ENCODE measurements at regions of chr16 and their contacts with region 1.

Region 1: GRCh38 chr16:87778830-87779579 is 13.2 kb upstream of the KLHDC4 start:
- DNase-seq: peak; percentile 96
- ATAC-seq: peak; percentile 81
- H3K4me3 Mint-ChIP-seq: peak overlapping the region; percentile 64
- H3K27ac Mint-ChIP-seq: peak overlapping the region; percentile 95
- H3K4me1 Mint-ChIP-seq: peaks cover 44% of the 10 kb centered on the region
- H3K27me3 Mint-ChIP-seq: no peaks in the 10 kb centered on the region
- CTCF ChIP-seq: peak; percentile 74

Region 2: GRCh38 chr16:87806603-87807546 is 27.9 kb after region 1 on chr16:
- CTCF ChIA-PET with region 1: interaction called, 89 read pairs
- POLR2A ChIA-PET with region 1: interaction called, 245 read pairs
- intact Hi-C with region 1: loop called (anchors 1 kb)
- DNase-seq: peak; percentile 55
- ATAC-seq: peak; percentile 43
- H3K4me3 Mint-ChIP-seq: peak overlapping the region; percentile 75
- H3K27ac Mint-ChIP-seq: peak overlapping the region; percentile 95
- H3K4me1 Mint-ChIP-seq: peaks cover 74% of the 10 kb centered on the region
- H3K27me3 Mint-ChIP-seq: no peaks in the 10 kb centered on the region
- CTCF ChIP-seq: no peak

Region 3: GRCh38 chr16:87853411-87854052 is 74.5 kb after region 1 on chr16:
- CTCF ChIA-PET with region 1: interaction called, 49 read pairs
- POLR2A ChIA-PET with region 1: interaction called, 54 read pairs
- intact Hi-C with region 1: loop called (anchors 1 kb)
- DNase-seq: peak; percentile 73
- ATAC-seq: peak; percentile 76
- H3K4me3 Mint-ChIP-seq: peak overlapping the region; percentile 70
- H3K27ac Mint-ChIP-seq: peak overlapping the region; percentile 71
- H3K4me1 Mint-ChIP-seq: peaks cover 44% of the 10 kb centered on the region
- H3K27me3 Mint-ChIP-seq: no peaks in the 10 kb centered on the region
- CTCF ChIP-seq: no peak

Region 4: DNA sequence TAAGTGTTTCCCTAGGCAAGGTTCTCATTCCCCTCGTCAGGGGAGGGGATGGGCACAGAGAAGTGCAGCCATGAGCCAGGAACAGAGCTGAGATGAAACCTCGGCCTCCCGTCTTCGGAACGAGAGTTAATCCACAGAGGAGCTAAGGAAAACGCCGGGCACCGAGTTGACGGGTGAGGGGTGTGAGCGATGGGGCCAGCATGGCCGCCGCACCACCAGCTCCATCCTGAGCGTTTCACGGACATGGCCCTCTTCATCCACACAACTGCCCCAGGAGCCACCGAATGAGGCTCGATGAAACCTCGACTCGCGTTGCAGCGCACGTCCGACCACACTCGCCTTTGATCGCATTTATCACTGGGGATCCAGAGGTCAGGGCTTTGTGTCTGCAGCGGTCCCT is 135.8 kb after region 1 on chr16:
- CTCF ChIA-PET with region 1: interaction called, 30 read pairs
- POLR2A ChIA-PET with region 1: interaction called, 5 read pairs
- intact Hi-C with region 1: no loop called
- DNase-seq: no peak
- ATAC-seq: no peak
- H3K4me3 Mint-ChIP-seq: no peak overlapping the region
- H3K27ac Mint-ChIP-seq: no peak overlapping the region
- H3K4me1 Mint-ChIP-seq: no peaks in the 10 kb centered on the region
- H3K27me3 Mint-ChIP-seq: peaks cover 28% of the 10 kb centered on the region
- CTCF ChIP-seq: no peak

Region 5: DNA sequence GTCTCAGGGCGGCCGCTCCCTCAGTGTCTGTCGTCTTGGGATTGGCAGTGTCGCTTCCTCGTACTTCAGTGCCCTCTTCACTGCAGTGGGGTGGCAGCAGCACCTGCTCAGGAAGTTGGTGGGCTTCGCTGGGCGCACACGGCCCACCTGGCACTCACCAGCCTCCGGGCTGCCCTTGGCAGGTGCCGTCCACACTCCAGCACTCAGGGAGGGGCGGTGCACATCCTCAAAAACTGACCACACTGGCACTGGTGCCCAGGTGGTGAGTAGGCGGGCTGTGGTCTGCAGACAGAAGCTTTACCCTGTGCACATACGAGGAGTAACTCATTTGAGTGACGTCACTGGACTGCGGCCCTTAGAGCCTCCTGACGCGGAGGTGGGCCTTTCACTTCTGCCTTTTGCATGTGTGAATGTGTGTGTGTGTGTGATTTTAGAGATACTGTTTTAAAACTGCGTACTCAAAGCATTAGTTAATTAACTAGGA is 266.9 kb after region 1 on chr16:
- CTCF ChIA-PET with region 1: no interaction called
- POLR2A ChIA-PET with region 1: interaction called, 8 read pairs
- intact Hi-C with region 1: loop called (anchors 1 kb)
- DNase-seq: peak; percentile 83
- ATAC-seq: peak; percentile 72
- H3K4me3 Mint-ChIP-seq: peak overlapping the region; percentile 77
- H3K27ac Mint-ChIP-seq: peak overlapping the region; percentile 98
- H3K4me1 Mint-ChIP-seq: peaks cover 83% of the 10 kb centered on the region
- H3K27me3 Mint-ChIP-seq: no peaks in the 10 kb centered on the region
- CTCF ChIP-seq: no peak

Region 6: GRCh38 chr16:88144028-88144511 is 365.1 kb after region 1 on chr16:
- CTCF ChIA-PET with region 1: no interaction called
- POLR2A ChIA-PET with region 1: no interaction called
- intact Hi-C with region 1: no loop called
- DNase-seq: no peak
- ATAC-seq: no peak
- H3K4me3 Mint-ChIP-seq: no peak overlapping the region
- H3K27ac Mint-ChIP-seq: no peak overlapping the region
- H3K4me1 Mint-ChIP-seq: peaks cover 5% of the 10 kb centered on the region
- H3K27me3 Mint-ChIP-seq: no peaks in the 10 kb centered on the region
- CTCF ChIP-seq: no peak

Region 7: DNA sequence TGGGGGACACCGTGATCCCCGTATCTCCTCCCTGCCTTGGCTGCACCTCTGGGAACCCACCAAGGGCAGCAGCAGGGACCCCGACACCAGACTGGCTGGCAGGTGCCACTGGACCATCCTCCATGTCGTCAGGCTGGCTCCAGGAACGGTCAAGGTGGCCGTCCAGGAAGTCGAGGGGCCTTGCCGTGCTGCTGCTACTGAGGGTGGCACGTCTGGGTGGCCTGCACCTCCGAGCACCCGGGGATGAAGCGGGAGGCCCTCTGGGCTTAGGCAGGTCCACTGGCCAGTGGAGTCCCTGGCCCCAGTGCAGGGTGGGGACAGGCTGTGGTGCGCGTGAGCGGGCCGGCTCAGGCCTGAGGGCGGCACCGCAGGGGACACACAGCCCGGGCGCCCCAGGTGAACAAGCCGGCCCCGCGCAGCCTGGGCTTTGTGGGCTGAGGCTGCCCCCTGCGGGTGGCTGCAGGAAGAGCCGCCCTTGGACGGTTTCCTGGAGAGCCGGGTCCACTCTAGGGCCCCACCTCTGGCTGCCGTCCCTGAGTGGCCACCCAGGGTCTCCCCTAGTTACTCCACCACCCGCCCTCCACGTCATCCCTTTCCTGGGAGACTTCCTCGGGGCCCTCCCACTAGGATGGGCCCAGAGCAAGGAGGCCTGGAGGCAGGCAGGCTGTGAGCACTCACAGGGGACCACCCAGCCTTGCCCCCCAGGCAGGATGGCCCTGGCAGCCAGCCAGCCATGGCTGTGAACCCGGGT is 748.4 kb after region 1 on chr16:
- CTCF ChIA-PET with region 1: no interaction called
- POLR2A ChIA-PET with region 1: no interaction called
- intact Hi-C with region 1: loop called (anchors 2 kb)
- DNase-seq: peak; percentile 73
- ATAC-seq: peak; percentile 87
- H3K4me3 Mint-ChIP-seq: no peak overlapping the region
- H3K27ac Mint-ChIP-seq: no peak overlapping the region
- H3K4me1 Mint-ChIP-seq: peaks cover 5% of the 10 kb centered on the region
- H3K27me3 Mint-ChIP-seq: no peaks in the 10 kb centered on the region
- CTCF ChIP-seq: peak; percentile 23